K562 (cell line): ENCODE measurements at regions of chr4 and their contacts with region 1.

Region 1: DNA sequence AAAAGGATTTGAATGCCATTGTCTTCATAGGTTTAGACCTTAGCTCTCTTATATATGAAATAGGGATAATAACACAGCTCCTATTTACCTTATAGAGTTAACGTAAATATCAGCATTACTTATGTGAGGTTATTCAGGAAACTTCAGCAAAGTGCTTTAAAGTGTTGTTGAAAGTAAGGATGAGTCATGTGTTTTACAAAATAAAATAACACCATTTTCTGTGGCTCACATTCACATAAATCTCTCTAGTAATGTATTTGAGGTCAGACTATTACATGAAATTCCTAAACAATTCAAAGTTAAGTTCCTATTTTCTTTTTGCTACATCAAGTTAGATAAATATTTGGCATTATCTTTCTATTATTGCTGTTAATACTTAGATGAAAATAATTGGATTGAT is 2.9 kb downstream of the GNRHR start:
- DNase-seq: no peak
- ATAC-seq: no peak
- H3K4me3 ChIP-seq: no peak overlapping the region
- H3K27ac ChIP-seq: no peak overlapping the region
- H3K4me1 ChIP-seq: no peaks in the 10 kb centered on the region
- H3K27me3 ChIP-seq: no peaks in the 10 kb centered on the region
- CTCF ChIP-seq: no peak
- EP300 ChIP-seq: no peak
- POLR2A ChIP-seq: no peak
- RAD21 ChIP-seq: no peak

Region 2: GRCh38 chr4:67899096-67899495 is 147.8 kb after region 1 on chr4:
- CTCF ChIA-PET with region 1: no interaction called
- POLR2A ChIA-PET with region 1: no interaction called
- in situ Hi-C with region 1: no loop called
- intact Hi-C with region 1: no loop called
- DNase-seq: no peak
- ATAC-seq: no peak
- H3K4me3 ChIP-seq: no peak overlapping the region
- H3K27ac ChIP-seq: no peak overlapping the region
- H3K4me1 ChIP-seq: peaks cover 0 to 6% of the 10 kb centered on the region in 2 experiments; a peak in 1 of 5 replicates
- H3K27me3 ChIP-seq: no peaks in the 10 kb centered on the region
- CTCF ChIP-seq: no peak
- EP300 ChIP-seq: no peak
- POLR2A ChIP-seq: no peak
- RAD21 ChIP-seq: no peak

Region 3: GRCh38 chr4:68167706-68168105 is 416.4 kb after region 1 on chr4:
- CTCF ChIA-PET with region 1: no interaction called
- POLR2A ChIA-PET with region 1: no interaction called
- in situ Hi-C with region 1: loop called (anchors 10 kb)
- intact Hi-C with region 1: no loop called
- DNase-seq: no peak
- ATAC-seq: no peak
- H3K4me3 ChIP-seq: no peak overlapping the region
- H3K27ac ChIP-seq: no peak overlapping the region
- H3K4me1 ChIP-seq: no peaks in the 10 kb centered on the region
- H3K27me3 ChIP-seq: no peaks in the 10 kb centered on the region
- CTCF ChIP-seq: no peak
- EP300 ChIP-seq: no peak
- POLR2A ChIP-seq: no peak
- RAD21 ChIP-seq: no peak